Activated CD8-positive, alpha-beta T cell treated with anti-CD3 and anti-CD28 coated beads, Interleukin-2, amount 10 ng/mL, durations not matched to agents 7 days and 5 days (primary cell): ENCODE measurements at regions of chr12 and their contacts with region 1.

Region 1: GRCh38 chr12:108633534-108634248 is at the start of gene SELPLG:
- DNase-seq: peak; percentile 92
- ATAC-seq: peak; percentile 59
- H3K4me3 Mint-ChIP-seq: peak within 1 kb of the TSS; percentile 100
- H3K27ac Mint-ChIP-seq: peak within 1 kb of the TSS; percentile 99
- H3K4me1 Mint-ChIP-seq: peaks cover 63% of the 10 kb centered on the region
- H3K27me3 Mint-ChIP-seq: no peaks in the 10 kb centered on the region
- total RNA-seq, gene SELPLG: 144 to 150 TPM

Region 2: DNA sequence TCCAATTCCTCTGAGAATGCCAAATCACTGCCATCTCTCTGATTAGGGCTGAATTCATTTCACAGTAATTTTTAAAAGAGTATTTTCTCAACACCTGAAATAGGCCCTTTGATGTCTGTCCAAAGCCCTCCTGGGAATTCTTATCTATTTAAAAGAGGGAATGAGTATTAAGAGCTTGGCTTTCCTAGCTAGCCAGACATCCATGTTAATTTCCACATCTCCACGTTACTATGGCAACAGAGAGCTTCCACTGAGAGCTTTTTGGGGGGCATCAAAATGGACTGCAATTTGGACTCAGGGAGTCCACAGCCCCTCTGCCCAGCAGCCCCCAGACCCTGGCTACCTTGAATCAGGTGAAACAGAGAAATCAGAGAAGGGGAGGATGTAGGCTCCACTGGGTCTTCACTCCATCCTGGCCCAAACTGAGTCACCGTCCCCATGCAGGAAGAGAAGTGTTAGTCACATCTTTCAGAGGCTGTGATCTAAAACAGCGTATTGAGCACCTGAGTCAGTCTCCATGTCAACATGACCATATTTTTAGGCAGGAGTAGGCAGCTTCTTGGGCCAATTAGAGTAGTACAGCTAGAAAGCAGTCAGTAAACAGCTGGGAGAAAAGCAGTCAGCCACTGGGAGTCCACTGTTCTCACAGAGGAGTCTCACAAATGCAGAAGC is 125.6 kb before region 1 on chr12:
- CTCF ChIA-PET with region 1: no interaction called
- POLR2A ChIA-PET with region 1: no interaction called
- DNase-seq: no peak
- ATAC-seq: no peak
- H3K4me3 Mint-ChIP-seq: no peak overlapping the region
- H3K27ac Mint-ChIP-seq: no peak overlapping the region
- H3K4me1 Mint-ChIP-seq: peaks cover 13% of the 10 kb centered on the region
- H3K27me3 Mint-ChIP-seq: peaks cover 4% of the 10 kb centered on the region

Region 3: DNA sequence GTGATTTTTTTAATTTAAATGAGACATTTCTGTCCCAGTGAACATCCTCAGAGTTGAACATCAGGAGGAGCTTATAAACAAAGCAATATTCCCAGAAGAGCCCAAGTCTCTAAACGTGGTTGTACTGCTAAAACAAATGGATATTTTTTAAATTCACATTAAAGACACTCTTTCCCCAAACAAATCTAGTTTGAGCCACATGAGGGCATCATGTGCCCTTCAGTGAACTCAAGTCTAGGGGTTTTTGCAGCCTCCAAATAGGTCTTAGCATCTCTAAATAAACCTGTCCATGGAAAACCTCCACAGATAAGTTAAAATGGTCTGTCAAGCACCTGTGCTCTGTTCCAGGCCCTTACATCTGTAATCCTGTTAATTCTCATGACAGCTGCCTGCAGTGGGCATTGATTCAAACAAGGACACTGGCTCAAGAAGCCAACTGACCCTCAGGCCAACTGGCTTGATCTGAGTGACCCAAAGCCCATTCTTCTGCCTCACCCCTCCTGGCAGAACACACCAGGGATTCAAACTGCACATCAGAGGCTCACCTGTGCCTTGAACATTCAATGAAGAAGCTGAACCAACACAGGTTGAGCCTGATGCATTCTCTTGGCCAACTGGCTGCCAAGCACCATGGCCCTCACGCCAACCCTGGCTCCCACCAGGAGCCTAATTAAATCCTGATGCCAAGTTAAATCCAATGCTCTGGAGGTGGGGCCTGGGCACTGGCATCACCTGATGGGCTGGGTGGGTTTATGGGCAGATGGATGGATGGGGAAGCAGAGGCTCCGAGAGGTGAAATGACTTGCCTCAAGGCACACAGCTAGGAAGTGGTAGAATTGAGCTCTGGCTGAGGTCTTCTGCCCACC is 62.7 kb before region 1 on chr12:
- CTCF ChIA-PET with region 1: interaction called, 29 read pairs
- POLR2A ChIA-PET with region 1: interaction called, 13 read pairs
- DNase-seq: peak; percentile 33
- ATAC-seq: no peak
- H3K4me3 Mint-ChIP-seq: no peak overlapping the region
- H3K27ac Mint-ChIP-seq: peak overlapping the region; percentile 40
- H3K4me1 Mint-ChIP-seq: peaks cover 79% of the 10 kb centered on the region
- H3K27me3 Mint-ChIP-seq: no peaks in the 10 kb centered on the region

Region 4: GRCh38 chr12:108646600-108647579 is 13.2 kb after region 1 on chr12:
- CTCF ChIA-PET with region 1: interaction called, 27 read pairs
- POLR2A ChIA-PET with region 1: interaction called, 25 read pairs
- DNase-seq: no peak
- ATAC-seq: no peak
- H3K4me3 Mint-ChIP-seq: no peak overlapping the region
- H3K27ac Mint-ChIP-seq: peak overlapping the region; percentile 84
- H3K4me1 Mint-ChIP-seq: peaks cover 33% of the 10 kb centered on the region
- H3K27me3 Mint-ChIP-seq: no peaks in the 10 kb centered on the region